Posterior cingulate gyrus (tissue), 11 donors: ENCODE measurements at regions of chr9 and their contacts with region 1.

Region 1: DNA sequence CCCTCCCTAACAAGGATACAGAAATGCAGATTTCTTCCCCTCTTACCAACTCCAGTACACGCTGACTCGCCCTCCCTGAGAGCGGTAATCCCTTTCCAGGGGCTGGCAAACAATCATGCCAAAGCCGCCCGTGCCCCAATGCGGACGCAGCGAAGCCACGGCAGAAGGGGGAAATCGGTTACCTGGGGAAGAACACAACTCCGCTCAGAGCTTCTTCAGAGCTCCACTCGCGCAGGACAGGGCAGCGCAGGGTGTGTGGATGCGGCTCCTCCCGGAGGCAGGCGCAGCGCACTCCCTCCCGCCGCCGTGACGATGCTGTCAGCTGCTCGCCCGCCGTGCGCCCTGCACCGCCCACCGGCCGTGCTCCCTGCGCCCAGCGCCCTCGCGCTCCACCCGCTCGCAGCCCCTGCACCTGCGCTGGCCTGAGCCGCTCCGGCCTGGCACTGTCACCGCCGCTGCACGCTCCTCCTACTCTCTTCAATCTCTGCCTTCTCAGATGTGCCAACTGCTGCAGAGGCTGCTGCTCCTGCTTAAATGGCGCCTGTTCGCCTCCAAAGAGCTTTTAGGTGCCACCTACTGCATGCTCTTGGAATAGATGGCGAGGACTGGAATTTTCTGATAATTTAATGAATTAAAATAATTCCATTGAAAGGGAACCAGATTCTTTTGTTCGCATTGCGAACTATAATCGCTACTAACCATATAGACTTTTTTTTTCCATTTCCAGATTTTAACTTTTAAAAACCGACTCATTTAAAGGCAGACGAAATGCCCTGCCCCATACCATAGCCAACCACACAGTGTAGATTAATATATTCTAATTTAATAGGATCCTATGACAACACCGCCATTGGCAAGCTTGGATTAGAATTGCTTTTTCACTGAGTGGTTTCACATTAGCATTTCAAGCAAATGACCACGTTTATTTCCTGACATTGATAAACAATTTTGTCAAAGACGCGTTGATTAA is at the start of gene DIRAS2:
- DNase-seq: peak; percentile 70 to 97 (median 84)

Region 2: DNA sequence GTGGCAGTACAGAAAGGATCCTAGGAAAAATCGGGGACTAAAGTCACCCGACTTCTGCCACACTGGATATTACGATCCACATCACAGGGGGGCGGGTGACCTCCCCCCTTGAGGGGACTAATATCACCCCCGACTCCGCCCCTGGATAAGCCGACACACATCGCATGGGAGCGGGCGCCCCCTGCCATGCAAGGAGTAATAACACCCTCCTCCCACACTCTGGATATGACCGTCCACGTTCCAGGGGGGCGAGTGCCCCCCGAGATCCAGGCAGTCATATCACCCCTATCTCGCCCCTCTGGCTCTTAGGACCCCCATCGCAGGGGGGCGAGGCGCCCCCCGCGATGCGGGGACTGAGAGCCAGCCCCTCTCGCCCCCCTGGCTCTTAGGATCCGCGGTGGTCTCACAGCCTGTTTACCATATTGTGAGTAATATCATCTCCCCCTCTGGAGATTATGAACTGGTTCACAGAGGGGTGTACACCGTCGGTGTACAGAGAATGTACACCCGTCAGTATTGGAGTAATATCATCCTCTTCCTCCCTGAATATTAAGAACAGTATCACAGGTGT is 423.2 kb before region 1 on chr9:
- intact Hi-C with region 1: loop called (anchors 10 kb)
- DNase-seq: peak in 1 of 10 donors; percentile 83

Region 3: GRCh38 chr9:90274727-90275126 is 368.1 kb before region 1 on chr9:
- intact Hi-C with region 1: no loop called
- DNase-seq: no peak

Region 4: GRCh38 chr9:90600029-90600428 is 42.8 kb before region 1 on chr9:
- intact Hi-C with region 1: no loop called
- DNase-seq: no peak